Activated naive CD4-positive, alpha-beta T cell treated with anti-CD3 and anti-CD28 coated beads, Interleukin-2, amount 10 ng/mL, durations not matched to agents 7 days and 5 days (primary cell): ENCODE measurements at regions of chr15 and their contacts with region 1.

Region 1: DNA sequence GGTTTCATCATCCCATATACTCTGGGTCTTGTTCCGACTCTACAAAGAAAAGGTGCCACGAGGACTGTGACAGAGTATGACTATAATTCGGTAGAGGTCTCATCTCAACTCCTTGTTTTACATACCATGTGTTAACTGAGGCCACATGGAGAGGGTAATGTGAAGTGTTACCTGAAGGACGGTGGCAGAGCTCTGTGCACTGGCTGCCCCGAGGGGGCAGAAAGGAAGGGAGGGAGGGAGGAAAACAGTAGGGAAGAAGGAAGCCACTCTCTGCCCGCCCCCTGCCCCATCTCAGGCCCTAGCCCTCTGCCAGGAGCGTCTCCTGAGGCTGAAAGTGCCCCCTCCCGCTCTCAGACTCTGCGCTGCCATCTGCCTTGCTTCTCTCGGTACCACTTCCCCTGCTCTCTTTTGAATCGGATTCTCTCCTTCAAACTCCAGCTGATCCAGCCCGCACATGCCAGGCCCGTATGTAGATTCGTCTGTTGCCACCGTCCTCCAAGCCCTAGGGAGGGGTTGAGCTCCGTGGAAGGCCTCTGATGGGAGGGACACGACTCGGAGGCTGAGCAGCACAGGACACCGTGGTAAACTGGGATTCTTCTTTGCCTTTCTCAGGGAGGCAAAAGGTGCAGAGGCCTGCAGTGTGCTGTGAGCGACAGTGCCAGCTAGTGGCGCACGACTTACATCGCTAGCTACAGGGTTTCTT is 70.5 kb upstream of the ATP10A start:
- DNase-seq: peak; percentile 85
- H3K4me3 Mint-ChIP-seq: peak overlapping the region; percentile 72
- H3K27ac Mint-ChIP-seq: no peak overlapping the region
- H3K4me1 Mint-ChIP-seq: peaks cover 6% of the 10 kb centered on the region
- H3K27me3 Mint-ChIP-seq: peaks cover 16% of the 10 kb centered on the region

Region 2: DNA sequence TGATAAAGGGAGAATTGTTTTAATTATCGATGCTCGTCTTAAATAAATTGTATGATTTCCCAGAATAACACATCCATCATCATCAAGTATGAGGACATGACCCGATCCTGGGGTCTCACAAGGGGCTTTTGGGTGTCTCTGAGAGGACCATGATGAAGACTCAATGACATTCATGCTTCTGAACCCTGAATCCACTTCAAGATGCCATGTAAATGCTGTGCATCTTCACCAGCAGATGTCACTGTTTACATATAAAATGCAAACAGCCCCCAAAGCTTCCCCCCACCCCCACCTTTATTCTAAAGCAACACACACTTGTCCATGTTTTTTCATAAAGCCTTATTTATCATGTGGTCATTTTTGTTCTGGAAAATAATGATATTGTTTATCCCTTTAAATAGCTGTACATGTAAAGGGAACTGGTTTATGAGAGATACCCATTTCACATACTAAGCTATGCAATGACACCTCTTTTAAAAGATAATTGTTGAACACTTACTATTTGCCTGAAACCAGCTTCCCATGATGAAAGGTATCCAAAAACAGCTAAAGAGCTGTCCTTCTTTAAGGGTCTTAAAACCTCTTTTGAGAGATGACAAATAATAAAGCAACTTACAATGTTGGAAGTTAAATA is 425.1 kb before region 1 on chr15:
- CTCF ChIA-PET with region 1: interaction called, 26 read pairs
- DNase-seq: no peak
- H3K4me3 Mint-ChIP-seq: no peak overlapping the region
- H3K27ac Mint-ChIP-seq: no peak overlapping the region
- H3K4me1 Mint-ChIP-seq: no peaks in the 10 kb centered on the region
- H3K27me3 Mint-ChIP-seq: no peaks in the 10 kb centered on the region

Region 3: DNA sequence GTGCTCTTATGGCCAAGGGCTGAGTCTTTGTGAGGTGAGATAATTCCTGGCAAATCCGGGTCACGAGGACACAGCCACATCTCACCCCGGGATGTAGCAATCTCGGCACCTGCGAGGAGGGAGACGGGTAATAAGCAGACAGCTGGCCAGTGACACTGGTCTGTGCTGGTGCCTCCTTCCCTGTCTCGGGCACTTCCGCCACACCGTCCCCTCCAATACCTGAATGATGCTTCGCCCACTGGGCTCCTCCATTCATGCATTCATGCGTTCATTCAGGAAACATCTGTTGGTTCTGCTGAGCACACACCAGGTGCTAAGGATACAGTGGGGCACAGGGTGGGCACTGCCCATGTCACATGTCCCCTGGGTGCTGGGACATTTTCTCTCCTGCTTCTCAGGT is 130.6 kb before region 1 on chr15:
- CTCF ChIA-PET with region 1: no interaction called
- DNase-seq: no peak
- H3K4me3 Mint-ChIP-seq: no peak overlapping the region
- H3K27ac Mint-ChIP-seq: no peak overlapping the region
- H3K4me1 Mint-ChIP-seq: peaks cover 50% of the 10 kb centered on the region
- H3K27me3 Mint-ChIP-seq: no peaks in the 10 kb centered on the region

Region 4: DNA sequence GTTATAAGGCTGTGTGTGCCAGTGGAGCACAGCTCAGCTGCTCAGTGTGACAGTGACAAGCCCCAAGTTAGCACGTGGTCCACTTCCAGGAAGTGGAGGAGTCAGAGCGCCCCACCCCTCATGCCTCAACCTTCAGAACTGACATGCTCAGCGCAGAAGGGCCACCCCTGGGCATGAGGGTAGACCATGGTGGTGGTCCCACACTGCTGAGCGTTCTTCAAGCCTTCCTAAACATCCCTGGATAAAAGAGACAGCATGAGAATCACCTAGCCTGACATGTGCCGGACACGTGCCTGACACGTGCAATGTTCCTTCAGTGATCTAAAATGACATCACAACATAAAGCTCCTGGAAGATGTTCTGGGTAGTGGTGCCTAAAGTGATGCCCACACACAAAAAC is 87.2 kb before region 1 on chr15:
- CTCF ChIA-PET with region 1: interaction called, 10 read pairs
- DNase-seq: peak; percentile 80
- H3K4me3 Mint-ChIP-seq: peak overlapping the region; percentile 49
- H3K27ac Mint-ChIP-seq: peak overlapping the region; percentile 97
- H3K4me1 Mint-ChIP-seq: peaks cover 78% of the 10 kb centered on the region
- H3K27me3 Mint-ChIP-seq: no peaks in the 10 kb centered on the region

Region 5: DNA sequence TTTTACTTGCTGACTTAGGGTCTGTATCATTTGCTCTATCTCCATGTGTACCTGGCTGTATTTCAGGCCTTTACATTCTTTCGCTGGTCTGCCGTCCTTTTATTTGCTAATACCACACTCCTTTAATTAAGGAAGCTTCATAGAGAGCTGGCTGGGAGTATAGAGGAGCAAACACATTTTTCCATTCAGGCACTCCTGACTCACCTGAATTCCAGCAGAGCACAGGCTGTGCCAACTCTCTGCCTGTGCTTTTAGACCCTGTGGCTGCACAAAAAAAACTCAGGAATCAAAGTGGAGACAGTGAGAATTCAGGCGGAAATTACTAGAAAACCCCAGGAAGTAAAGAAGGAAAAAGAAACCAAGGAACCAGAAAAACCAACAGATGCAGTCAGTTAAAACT is 41.5 kb before region 1 on chr15:
- CTCF ChIA-PET with region 1: no interaction called
- DNase-seq: no peak
- H3K4me3 Mint-ChIP-seq: no peak overlapping the region
- H3K27ac Mint-ChIP-seq: no peak overlapping the region
- H3K4me1 Mint-ChIP-seq: no peaks in the 10 kb centered on the region
- H3K27me3 Mint-ChIP-seq: peaks cover 14% of the 10 kb centered on the region

Region 6: GRCh38 chr15:26166429-26166828 is 232.8 kb after region 1 on chr15:
- CTCF ChIA-PET with region 1: no interaction called
- DNase-seq: no peak
- H3K4me3 Mint-ChIP-seq: no peak overlapping the region
- H3K27ac Mint-ChIP-seq: no peak overlapping the region
- H3K4me1 Mint-ChIP-seq: no peaks in the 10 kb centered on the region
- H3K27me3 Mint-ChIP-seq: no peaks in the 10 kb centered on the region